K562 (cell line): ENCODE measurements at regions of chr4 and their contacts with region 1.

Region 1: DNA sequence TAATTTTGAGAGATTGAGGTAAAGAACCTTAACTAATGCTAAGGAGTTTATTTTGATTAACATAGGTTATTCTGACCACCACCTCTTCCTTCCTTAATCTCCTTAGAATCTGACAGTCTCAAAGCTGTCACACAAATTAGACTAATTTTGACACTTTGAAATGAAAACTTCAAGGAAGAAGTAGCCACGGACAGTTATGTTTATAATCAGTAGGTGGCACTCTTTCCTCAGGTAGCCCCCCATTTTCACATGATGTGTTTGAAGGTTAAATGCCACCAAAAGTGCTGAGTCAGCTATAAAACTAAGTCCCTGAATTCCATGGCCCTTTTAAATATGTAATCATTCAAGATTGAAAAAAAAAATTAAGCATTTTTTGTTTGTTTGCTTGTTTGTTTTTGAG is 22.4 kb downstream of the TMEM33 start:
- DNase-seq: peak; percentile 38 to 63 (median 56)
- ATAC-seq: peak; percentile 86
- H3K4me3 ChIP-seq: no peak overlapping the region
- H3K27ac ChIP-seq: no peak overlapping the region
- H3K4me1 ChIP-seq: no peaks in the 10 kb centered on the region
- H3K27me3 ChIP-seq: no peaks in the 10 kb centered on the region
- CTCF ChIP-seq: peak; percentile 58 to 81 (median 62)
- EP300 ChIP-seq: no peak; the same call in 1 of the 2 replicates
- POLR2A ChIP-seq: no peak
- RAD21 ChIP-seq: peak; percentile 57 to 69

Region 2: DNA sequence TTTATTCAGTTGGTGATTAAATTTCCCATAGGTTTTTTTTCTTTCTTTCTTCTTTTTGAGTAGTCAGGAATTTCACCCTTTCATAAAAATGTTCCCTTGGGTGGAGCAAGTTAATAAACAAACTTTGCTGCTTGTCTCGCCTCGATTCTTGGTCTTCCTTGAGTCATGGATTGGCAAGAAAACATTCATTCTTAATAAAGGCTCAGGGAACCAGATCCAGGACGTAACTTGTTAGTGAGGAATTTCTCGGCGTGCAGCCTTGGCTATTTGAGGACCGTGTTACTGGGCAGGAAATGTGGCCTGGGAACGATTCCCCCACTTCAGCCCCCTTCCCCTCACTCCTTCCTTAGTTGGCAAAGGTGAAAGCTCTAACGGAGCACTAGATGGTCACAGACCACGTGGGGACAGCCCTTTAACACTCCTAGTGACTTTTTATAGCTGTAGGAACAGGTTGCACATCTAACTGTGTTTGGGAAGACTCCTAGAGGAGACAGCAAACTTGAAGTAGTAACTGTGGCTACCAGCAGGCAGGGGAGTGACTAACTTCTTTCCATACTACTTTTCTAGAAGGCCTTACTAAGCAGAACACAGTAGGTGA is 594.2 kb before region 1 on chr4:
- CTCF ChIA-PET with region 1: no interaction called
- POLR2A ChIA-PET with region 1: no interaction called
- in situ Hi-C with region 1: no loop called
- intact Hi-C with region 1: no loop called
- DNase-seq: no peak
- ATAC-seq: no peak
- H3K4me3 ChIP-seq: no peak overlapping the region
- H3K27ac ChIP-seq: no peak overlapping the region
- H3K4me1 ChIP-seq: peaks cover 0 to 13% of the 10 kb centered on the region in 2 experiments; a peak in 2 of 5 replicates
- H3K27me3 ChIP-seq: peaks cover 3 to 30% of the 10 kb centered on the region in 2 experiments; a peak in 4 of 5 replicates
- CTCF ChIP-seq: no peak
- EP300 ChIP-seq: no peak
- POLR2A ChIP-seq: no peak
- RAD21 ChIP-seq: no peak

Region 3: DNA sequence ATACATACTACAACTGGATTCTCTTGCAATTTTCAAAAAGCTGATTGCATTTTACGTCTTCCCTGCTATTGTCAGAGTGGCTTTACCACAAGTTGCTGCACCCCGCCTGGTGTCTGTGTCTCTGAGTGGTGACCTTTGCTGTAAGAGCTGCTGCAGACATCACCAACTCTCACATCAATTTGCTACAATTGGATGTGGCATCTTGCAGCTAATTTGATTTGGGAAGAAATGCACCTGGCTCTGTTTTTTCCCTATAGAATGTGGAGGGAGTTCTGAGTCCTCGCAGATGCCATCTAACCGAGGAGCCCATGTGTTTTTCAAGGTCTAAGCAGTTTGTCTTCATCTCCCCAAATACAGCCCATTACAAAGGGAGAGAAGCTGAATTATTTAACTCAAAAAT is 135.3 kb before region 1 on chr4:
- CTCF ChIA-PET with region 1: no interaction called
- POLR2A ChIA-PET with region 1: no interaction called
- in situ Hi-C with region 1: no loop called
- intact Hi-C with region 1: no loop called
- DNase-seq: no peak
- ATAC-seq: no peak
- H3K4me3 ChIP-seq: no peak overlapping the region
- H3K27ac ChIP-seq: no peak overlapping the region
- H3K4me1 ChIP-seq: no peaks in the 10 kb centered on the region
- H3K27me3 ChIP-seq: no peaks in the 10 kb centered on the region
- CTCF ChIP-seq: no peak
- EP300 ChIP-seq: no peak
- POLR2A ChIP-seq: no peak
- RAD21 ChIP-seq: no peak

Region 4: DNA sequence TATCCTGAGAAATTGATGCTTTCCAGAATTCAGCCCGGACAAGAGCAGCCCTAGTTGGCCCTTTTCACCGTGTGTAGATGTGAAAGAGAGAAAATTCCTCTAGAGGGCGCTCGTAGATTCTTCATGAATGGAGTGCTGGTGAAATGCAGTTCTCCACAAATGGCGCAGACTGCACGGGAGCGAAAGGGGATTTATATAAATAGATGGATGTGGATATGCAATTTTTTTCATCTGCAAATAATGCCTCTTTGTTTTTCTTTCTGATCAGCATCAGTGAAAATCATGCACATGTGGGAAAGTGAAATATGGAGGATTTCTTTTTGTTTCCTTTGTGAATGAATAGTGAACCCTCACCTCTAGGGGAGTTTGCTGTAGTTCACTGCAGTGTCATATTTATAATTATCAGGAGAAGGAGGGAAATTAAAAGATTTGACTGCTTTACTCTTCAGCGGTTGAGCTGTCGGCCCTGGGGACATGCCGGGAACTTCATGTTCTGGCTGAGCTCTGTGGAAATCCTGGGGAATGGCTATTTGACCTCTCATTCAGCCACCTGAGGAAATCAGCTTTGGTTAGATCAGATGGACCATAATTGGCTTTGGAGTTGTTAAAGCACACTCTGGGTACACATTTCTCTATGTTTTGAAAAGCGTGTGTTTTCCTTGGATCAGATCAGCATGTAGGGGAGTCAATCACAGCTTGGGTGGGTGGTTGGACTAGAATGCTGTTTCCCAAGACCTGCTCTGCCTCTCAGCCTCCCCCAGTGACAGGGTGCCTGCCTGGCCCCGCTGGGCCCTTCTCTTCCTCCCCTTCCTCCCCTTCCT is 324.7 kb after region 1 on chr4:
- CTCF ChIA-PET with region 1: interaction called, 5 read pairs
- POLR2A ChIA-PET with region 1: no interaction called
- in situ Hi-C with region 1: no loop called
- intact Hi-C with region 1: loop called (anchors 1 kb)
- DNase-seq: peak; percentile 59 to 69 (median 62)
- ATAC-seq: peak; percentile 95
- H3K4me3 ChIP-seq: no peak overlapping the region
- H3K27ac ChIP-seq: no peak overlapping the region
- H3K4me1 ChIP-seq: no peaks in the 10 kb centered on the region
- H3K27me3 ChIP-seq: no peaks in the 10 kb centered on the region
- CTCF ChIP-seq: peak; percentile 65 to 79 (median 76)
- EP300 ChIP-seq: no peak
- POLR2A ChIP-seq: no peak
- RAD21 ChIP-seq: peak; percentile 57 to 70